Dorsolateral prefrontal cortex (tissue), 120 donors: ENCODE measurements at regions of chr7 and their contacts with region 1.

Region 1: GRCh38 chr7:13262929-13263530 is 575.6 kb downstream of the ARL4A start:
- DNase-seq: no peak
- H3K4me3 ChIP-seq: no peak overlapping the region
- H3K27ac ChIP-seq: no peak overlapping the region
- H3K27me3 ChIP-seq: peaks cover 0 to 3% (median 0%) of the 10 kb centered on the region in 45 donors
- CTCF ChIP-seq: peak; percentile 58 to 93 (median 75)

Region 2: GRCh38 chr7:12638851-12639467 is 624.1 kb before region 1 on chr7:
- intact Hi-C with region 1: loop called (anchors 2 to 5 kb)
- DNase-seq: no peak
- H3K4me3 ChIP-seq: no peak overlapping the region
- H3K27ac ChIP-seq: no peak overlapping the region
- H3K27me3 ChIP-seq: peaks cover 0 to 4% (median 0%) of the 10 kb centered on the region in 45 donors
- CTCF ChIP-seq: peak; percentile 37 to 88 (median 72)

Region 3: GRCh38 chr7:13540429-13540828 is 277.4 kb after region 1 on chr7:
- intact Hi-C with region 1: no loop called
- DNase-seq: no peak
- H3K4me3 ChIP-seq: no peak overlapping the region
- H3K27ac ChIP-seq: no peak overlapping the region
- H3K27me3 ChIP-seq: peaks cover 0 to 3% (median 0%) of the 10 kb centered on the region in 45 donors
- CTCF ChIP-seq: no peak